SK-N-SH (cell line): ENCODE measurements at regions of chr16 and their contacts with region 1.

Region 1: DNA sequence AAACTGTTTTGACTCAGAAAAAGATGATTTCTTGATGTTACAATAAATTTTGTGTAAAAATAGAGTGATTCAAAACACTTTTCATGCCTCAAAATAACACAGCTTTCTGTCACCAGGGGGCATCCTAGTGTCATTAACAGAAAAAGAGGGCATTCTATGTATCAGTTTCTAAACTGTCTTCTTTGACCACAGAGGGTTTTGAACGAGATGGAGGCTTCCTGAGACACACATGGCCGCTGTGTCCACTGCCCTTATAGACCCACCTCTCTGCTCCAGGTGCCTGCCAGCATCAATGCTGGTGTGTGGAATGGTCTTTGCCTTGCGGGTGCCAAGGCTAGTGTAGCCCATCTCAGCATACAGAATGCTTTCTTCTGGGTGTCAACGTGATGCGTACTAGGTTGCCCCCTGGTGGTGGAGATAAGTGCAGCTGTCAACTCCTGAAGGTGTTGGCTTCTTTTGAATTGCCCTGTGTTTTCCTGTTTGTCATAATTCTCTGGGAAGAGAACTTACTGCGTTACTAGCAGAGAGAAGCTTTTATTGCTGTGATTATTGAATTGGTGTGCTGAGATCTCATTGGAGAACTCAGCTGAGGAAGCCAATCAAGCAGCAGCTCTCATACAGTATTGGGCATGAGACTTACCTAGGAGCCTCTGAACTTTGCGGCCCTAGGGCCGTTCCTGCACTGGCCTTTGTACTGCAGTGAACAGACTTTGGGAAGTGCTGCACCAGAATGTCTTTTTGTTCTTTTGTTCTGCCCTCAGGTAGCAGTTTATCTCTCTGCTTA is 38.6 kb downstream of the USP10 start:
- DNase-seq: peak; percentile 74
- H3K4me3 ChIP-seq: peak overlapping the region in 1 of 2 experiments; percentile 6; a peak in 1 of 4 replicates
- H3K27ac ChIP-seq: no peak overlapping the region
- H3K4me1 ChIP-seq: peaks cover 35 to 37% of the 10 kb centered on the region in 2 experiments
- H3K27me3 ChIP-seq: no peaks in the 10 kb centered on the region
- CTCF ChIP-seq: peak; percentile 94
- EP300 ChIP-seq: no peak
- RAD21 ChIP-seq: peak; percentile 64

Region 2: DNA sequence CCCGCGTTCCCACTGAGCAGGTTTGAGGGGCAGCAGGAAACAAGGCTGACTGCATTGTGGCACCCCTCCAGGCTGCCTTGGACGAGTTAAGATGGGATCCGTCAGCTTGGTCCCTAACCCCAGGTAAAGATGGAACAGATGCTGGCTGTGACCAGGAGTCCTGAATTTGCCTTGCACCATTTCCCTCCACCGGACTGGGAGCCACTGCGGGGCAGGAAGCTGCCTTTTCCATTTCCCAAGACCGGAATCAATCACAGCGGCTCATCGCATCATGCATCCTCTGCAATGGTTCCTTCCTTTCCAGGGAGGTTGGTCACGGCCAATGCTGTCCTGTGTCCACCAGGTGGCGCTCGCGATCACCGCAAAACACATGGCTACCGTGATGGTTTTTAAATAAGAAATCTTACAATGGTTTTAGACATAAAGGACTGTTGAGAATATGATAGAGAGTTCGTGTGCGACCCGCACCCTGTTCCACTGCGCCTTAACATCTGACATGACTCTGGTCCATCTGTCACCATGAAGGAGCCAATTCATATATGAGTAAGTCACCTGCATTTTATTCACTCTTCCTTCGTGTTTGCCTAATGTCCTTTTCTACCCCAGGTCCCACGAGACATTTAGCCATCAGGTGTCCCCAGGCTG is 227.1 kb before region 1 on chr16:
- CTCF ChIA-PET with region 1: interaction called, 24 read pairs
- POLR2A ChIA-PET with region 1: no interaction called
- DNase-seq: peak; percentile 85
- H3K4me3 ChIP-seq: peak overlapping the region; percentile 23 to 26; a peak in 3 of 4 replicates
- H3K27ac ChIP-seq: no peak overlapping the region
- H3K4me1 ChIP-seq: peaks cover 0 to 8% of the 10 kb centered on the region in 2 experiments; a peak in 1 of 4 replicates
- H3K27me3 ChIP-seq: no peaks in the 10 kb centered on the region
- CTCF ChIP-seq: peak; percentile 95
- EP300 ChIP-seq: no peak
- RAD21 ChIP-seq: peak; percentile 91

Region 3: GRCh38 chr16:84672276-84673202 is 65.9 kb before region 1 on chr16:
- CTCF ChIA-PET with region 1: interaction called, 56 read pairs
- POLR2A ChIA-PET with region 1: no interaction called
- DNase-seq: peak; percentile 82
- H3K4me3 ChIP-seq: no peak overlapping the region
- H3K27ac ChIP-seq: no peak overlapping the region
- H3K4me1 ChIP-seq: peaks cover 0 to 9% of the 10 kb centered on the region in 2 experiments; a peak in 3 of 4 replicates
- H3K27me3 ChIP-seq: no peaks in the 10 kb centered on the region
- CTCF ChIP-seq: peak; percentile 95
- EP300 ChIP-seq: no peak
- RAD21 ChIP-seq: peak; percentile 68

Region 4: DNA sequence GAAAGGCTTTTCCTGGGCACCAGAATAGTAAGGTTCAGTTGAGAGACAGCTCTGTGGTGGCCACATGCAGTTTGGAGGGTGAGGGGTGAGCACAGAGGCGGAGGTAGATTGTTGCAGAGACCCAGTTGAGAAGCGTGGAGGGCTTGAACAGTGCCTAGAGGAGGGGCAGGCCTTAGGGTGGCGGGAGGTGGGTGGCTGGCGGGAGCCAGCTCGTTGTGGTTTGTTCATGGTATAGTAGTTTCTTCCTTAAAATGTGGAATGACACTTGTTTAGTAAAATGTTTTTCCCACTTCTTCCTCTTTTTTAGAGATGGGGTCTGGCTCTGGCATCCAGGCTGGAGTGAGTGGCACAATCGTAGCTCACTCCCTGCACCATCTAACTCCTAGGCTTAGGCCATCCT is 24.4 kb before region 1 on chr16:
- CTCF ChIA-PET with region 1: interaction called, 18 read pairs
- POLR2A ChIA-PET with region 1: no interaction called
- DNase-seq: no peak
- H3K4me3 ChIP-seq: no peak overlapping the region
- H3K27ac ChIP-seq: no peak overlapping the region
- H3K4me1 ChIP-seq: peaks cover 3 to 4% of the 10 kb centered on the region in 2 experiments; a peak in 2 of 4 replicates
- H3K27me3 ChIP-seq: no peaks in the 10 kb centered on the region
- CTCF ChIP-seq: no peak
- EP300 ChIP-seq: no peak
- RAD21 ChIP-seq: no peak

Region 5: GRCh38 chr16:84726079-84726668 is 12.3 kb before region 1 on chr16:
- CTCF ChIA-PET with region 1: interaction called, 134 read pairs
- POLR2A ChIA-PET with region 1: no interaction called
- DNase-seq: peak; percentile 68
- H3K4me3 ChIP-seq: peak overlapping the region in 1 of 2 experiments; percentile 45; a peak in 1 of 4 replicates
- H3K27ac ChIP-seq: no peak overlapping the region
- H3K4me1 ChIP-seq: peaks cover 28 to 34% of the 10 kb centered on the region in 2 experiments; a peak in 3 of 4 replicates
- H3K27me3 ChIP-seq: no peaks in the 10 kb centered on the region
- CTCF ChIP-seq: peak; percentile 97
- EP300 ChIP-seq: no peak
- RAD21 ChIP-seq: peak; percentile 88

Region 6: GRCh38 chr16:84765616-84766580 is 27.5 kb after region 1 on chr16:
- CTCF ChIA-PET with region 1: interaction called, 21 read pairs
- POLR2A ChIA-PET with region 1: no interaction called
- DNase-seq: no peak
- H3K4me3 ChIP-seq: no peak overlapping the region
- H3K27ac ChIP-seq: no peak overlapping the region
- H3K4me1 ChIP-seq: peaks cover 0 to 13% of the 10 kb centered on the region in 2 experiments; a peak in 2 of 4 replicates
- H3K27me3 ChIP-seq: no peaks in the 10 kb centered on the region
- CTCF ChIP-seq: no peak
- EP300 ChIP-seq: no peak
- RAD21 ChIP-seq: no peak

Region 7: GRCh38 chr16:85112364-85112763 is 373.9 kb after region 1 on chr16 and contains the start of gene CIBAR2:
- CTCF ChIA-PET with region 1: no interaction called
- POLR2A ChIA-PET with region 1: no interaction called
- DNase-seq: peak; percentile 92
- H3K4me3 ChIP-seq: no peak within 1 kb of the TSS
- H3K27ac ChIP-seq: no peak within 1 kb of the TSS
- H3K4me1 ChIP-seq: peaks cover 0 to 11% of the 10 kb centered on the region in 2 experiments; a peak in 2 of 4 replicates
- H3K27me3 ChIP-seq: no peaks in the 10 kb centered on the region
- CTCF ChIP-seq: no peak
- EP300 ChIP-seq: no peak
- RAD21 ChIP-seq: no peak
- polyA plus RNA-seq, gene CIBAR2: 0.15 and 0.24 TPM in 2 replicates